ENCODE measurements at regions of chr18 and their contacts with region 1.

Region 1: GRCh38 chr18:3380384-3380961 is 69.5 kb upstream of the TGIF1 start:
- DNase-seq: peak; percentile 57
- H3K4me3 Mint-ChIP-seq: no peak overlapping the region
- H3K27ac Mint-ChIP-seq: no peak overlapping the region
- H3K4me1 Mint-ChIP-seq: peaks cover 9% of the 10 kb centered on the region
- H3K27me3 Mint-ChIP-seq: peaks cover 13% of the 10 kb centered on the region

Region 2: GRCh38 chr18:3340015-3340681 is 40.3 kb before region 1 on chr18:
- CTCF ChIA-PET with region 1: interaction called, 3 read pairs
- POLR2A ChIA-PET with region 1: no interaction called
- intact Hi-C with region 1: loop called (anchors 1 kb)
- DNase-seq: no peak
- H3K4me3 Mint-ChIP-seq: no peak overlapping the region
- H3K27ac Mint-ChIP-seq: peak overlapping the region; percentile 1
- H3K4me1 Mint-ChIP-seq: peaks cover 16% of the 10 kb centered on the region
- H3K27me3 Mint-ChIP-seq: no peaks in the 10 kb centered on the region

Region 3: GRCh38 chr18:3356614-3357013 is 23.9 kb before region 1 on chr18:
- CTCF ChIA-PET with region 1: interaction called, 6 read pairs
- POLR2A ChIA-PET with region 1: no interaction called
- intact Hi-C with region 1: loop called (anchors 1 kb)
- DNase-seq: no peak
- H3K4me3 Mint-ChIP-seq: no peak overlapping the region
- H3K27ac Mint-ChIP-seq: no peak overlapping the region
- H3K4me1 Mint-ChIP-seq: peaks cover 15% of the 10 kb centered on the region
- H3K27me3 Mint-ChIP-seq: peaks cover 2% of the 10 kb centered on the region

Region 4: DNA sequence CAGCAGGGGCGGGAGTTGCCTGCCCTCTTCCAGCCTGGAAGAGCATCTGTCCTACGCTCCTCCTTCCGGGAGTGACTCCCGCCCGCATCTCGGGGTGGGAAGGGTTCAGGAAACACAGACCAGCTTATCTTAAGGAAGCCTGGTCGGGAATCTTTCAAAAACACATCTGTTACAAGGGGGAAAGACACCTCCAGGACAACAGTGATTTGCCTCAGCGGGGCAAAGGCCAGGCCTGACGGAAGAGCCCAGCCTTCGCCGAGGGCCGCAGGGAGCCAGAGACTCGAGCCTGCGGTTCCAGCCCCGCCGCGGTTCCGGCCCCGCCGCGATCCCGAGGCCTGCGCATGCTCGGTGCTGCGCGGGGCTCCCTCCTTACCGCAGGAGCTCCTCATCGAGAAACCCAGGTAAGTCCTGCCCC is 31.4 kb after region 1 on chr18:
- CTCF ChIA-PET with region 1: interaction called, 7 read pairs
- POLR2A ChIA-PET with region 1: interaction called, 6 read pairs
- intact Hi-C with region 1: loop called (anchors 1 kb)
- DNase-seq: peak; percentile 42
- H3K4me3 Mint-ChIP-seq: peak overlapping the region; percentile 25
- H3K27ac Mint-ChIP-seq: peak overlapping the region; percentile 8
- H3K4me1 Mint-ChIP-seq: peaks cover 16% of the 10 kb centered on the region
- H3K27me3 Mint-ChIP-seq: no peaks in the 10 kb centered on the region

Measured in activated CD4-positive, alpha-beta memory T cell treated with anti-CD3 and anti-CD28 coated beads for 36 hours (primary cell).